Panc1 (cell line): ENCODE measurements at regions of chr4 and their contacts with region 1.

Region 1: DNA sequence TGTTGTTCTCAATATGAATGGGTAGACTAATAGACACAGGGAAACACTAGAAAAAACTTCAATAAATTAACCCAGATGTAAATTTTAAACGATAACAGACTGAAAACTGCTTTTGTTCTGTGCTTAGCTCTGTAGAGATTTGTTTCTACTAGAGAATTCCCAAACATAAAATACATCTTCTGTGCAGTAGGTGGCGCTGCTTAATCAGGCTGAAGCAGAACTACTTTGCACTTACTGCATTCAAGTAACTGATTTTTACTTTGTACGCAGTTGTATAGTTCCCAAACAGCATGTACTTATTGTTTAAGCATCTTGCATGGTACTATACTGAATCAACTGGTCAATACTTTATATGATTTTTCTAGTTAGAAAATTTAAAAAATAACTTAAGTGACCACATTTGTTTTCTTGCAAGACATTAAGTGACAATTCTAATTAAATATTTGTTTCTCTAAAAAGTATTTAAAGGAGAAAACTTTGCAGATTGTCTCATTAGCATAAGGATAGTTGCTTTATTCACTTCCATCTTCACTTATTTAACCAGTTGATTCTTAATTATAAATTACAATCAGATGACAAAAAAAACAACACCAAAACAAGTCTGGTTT is 490.6 kb downstream of the IL15 start:
- DNase-seq: peak; percentile 51
- ATAC-seq: peak; percentile 48; the same call in 1 of the 2 replicates
- H3K4me3 ChIP-seq: no peak overlapping the region
- H3K27ac ChIP-seq: no peak overlapping the region
- H3K4me1 ChIP-seq: no peaks in the 10 kb centered on the region
- H3K27me3 ChIP-seq: no peaks in the 10 kb centered on the region
- CTCF ChIP-seq: peak; percentile 68; the same call in 1 of the 2 replicates

Region 2: DNA sequence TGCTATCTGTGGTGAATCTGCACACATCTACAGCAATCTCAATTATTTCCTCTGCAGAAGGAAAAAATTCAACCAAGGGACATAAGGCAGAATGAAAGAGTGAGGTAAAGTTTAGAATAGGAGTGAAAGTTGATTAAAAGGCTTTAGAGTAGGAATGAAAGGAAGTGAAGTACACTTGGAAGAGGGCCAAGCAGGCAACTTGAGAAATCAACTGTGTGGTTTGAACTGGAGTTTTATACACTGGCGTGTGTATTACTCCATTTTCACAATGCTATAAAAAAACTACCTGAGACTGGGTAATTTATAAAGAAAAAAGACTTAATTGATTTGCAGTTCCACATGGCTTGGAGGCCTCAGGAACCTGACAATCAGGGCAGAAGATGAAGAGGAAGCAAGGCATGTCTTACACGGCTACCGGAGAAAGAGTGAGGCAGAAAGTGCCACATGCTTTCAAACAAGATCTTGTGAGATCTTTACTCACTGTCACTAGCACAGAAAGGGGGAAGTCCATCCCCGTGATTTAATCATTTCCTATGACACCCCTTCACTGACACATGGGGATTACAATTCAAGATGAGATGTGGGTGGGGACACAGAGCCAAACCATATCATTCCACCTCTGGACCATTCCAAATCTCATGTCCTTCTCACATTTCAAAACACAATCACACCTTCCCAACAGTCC is 255.8 kb before region 1 on chr4:
- CTCF ChIA-PET with region 1: no interaction called
- POLR2A ChIA-PET with region 1: no interaction called
- in situ Hi-C with region 1: no loop called
- intact Hi-C with region 1: no loop called
- DNase-seq: no peak
- ATAC-seq: no peak
- H3K4me3 ChIP-seq: no peak overlapping the region
- H3K27ac ChIP-seq: no peak overlapping the region
- H3K4me1 ChIP-seq: no peaks in the 10 kb centered on the region
- H3K27me3 ChIP-seq: no peaks in the 10 kb centered on the region
- CTCF ChIP-seq: no peak

Region 3: GRCh38 chr4:142095886-142096605 is 30.9 kb before region 1 on chr4:
- CTCF ChIA-PET with region 1: no interaction called
- POLR2A ChIA-PET with region 1: no interaction called
- in situ Hi-C with region 1: no loop called
- intact Hi-C with region 1: no loop called
- DNase-seq: peak; percentile 47
- ATAC-seq: peak; percentile 86
- H3K4me3 ChIP-seq: no peak overlapping the region
- H3K27ac ChIP-seq: no peak overlapping the region
- H3K4me1 ChIP-seq: no peaks in the 10 kb centered on the region
- H3K27me3 ChIP-seq: no peaks in the 10 kb centered on the region
- CTCF ChIP-seq: no peak

Region 4: DNA sequence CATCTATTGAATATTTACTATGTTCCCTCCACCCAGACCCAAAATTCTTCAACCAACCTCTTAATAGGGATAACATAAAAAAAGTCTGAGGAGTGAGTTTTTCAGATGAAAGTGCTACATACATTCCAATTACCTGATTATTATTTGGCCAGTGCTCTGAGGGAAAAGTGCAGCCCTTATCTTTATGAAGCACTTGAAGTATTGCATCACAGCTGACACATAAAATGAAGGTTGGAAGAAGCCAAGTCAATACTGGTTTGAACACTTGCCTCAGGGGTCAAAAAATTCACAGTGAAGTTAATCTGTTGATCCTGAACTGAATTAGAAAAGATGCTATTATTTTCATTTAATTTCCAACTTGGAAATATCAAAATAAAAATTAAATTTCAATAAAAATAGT is 220.2 kb after region 1 on chr4:
- CTCF ChIA-PET with region 1: no interaction called
- POLR2A ChIA-PET with region 1: no interaction called
- in situ Hi-C with region 1: no loop called
- intact Hi-C with region 1: loop called (anchors 5 kb)
- DNase-seq: no peak
- ATAC-seq: no peak
- H3K4me3 ChIP-seq: no peak overlapping the region
- H3K27ac ChIP-seq: no peak overlapping the region
- H3K4me1 ChIP-seq: no peaks in the 10 kb centered on the region
- H3K27me3 ChIP-seq: no peaks in the 10 kb centered on the region
- CTCF ChIP-seq: no peak

Region 5: GRCh38 chr4:142719854-142720541 is 593.0 kb after region 1 on chr4:
- CTCF ChIA-PET with region 1: no interaction called
- POLR2A ChIA-PET with region 1: no interaction called
- in situ Hi-C with region 1: no loop called
- intact Hi-C with region 1: loop called (anchors 10 kb)
- DNase-seq: no peak
- ATAC-seq: no peak
- H3K4me3 ChIP-seq: no peak overlapping the region
- H3K27ac ChIP-seq: no peak overlapping the region
- H3K4me1 ChIP-seq: no peaks in the 10 kb centered on the region
- H3K27me3 ChIP-seq: no peaks in the 10 kb centered on the region
- CTCF ChIP-seq: peak; percentile 53; the same call in 1 of the 2 replicates

Region 6: DNA sequence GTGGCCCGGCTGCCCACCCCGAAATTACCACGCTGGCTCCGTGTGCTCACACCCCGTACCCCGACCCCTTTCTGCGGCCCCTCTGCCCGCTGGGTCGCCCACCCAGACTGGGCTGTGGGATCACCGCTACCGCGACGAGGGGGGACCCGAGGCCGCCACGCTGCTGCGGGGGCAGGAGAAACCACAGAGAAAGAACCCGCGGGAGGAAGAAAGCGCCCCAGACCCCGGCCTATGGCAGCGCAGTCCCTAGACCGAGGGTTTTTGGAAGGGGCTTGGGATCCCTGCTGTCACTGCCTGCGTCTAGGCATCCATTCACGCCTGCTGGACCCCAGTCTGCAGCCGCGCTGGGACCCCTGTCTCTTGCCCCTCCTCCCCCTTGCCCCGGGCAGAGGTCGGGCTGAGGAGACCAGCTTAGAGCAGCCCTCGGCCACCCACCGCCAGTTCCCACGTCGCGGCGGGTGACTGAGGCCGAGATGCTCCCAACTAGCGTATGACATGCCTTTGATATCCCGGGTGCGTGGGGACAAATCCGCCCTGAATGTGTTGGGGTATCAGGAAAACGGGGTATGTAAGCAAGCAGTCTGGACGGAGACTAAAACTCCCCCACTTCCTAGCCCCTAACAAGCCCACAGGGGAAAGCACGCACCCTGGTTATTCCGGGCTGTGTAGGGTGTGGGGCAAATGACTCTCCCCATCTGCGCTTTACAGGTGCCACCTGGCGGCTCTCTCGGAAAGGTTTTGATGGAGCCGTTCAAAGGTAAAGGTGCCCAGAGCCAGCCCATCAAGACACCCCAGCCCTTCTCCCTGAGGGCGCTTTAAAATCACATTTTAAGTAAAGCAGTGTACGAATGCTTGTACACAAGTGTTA is 720.0 kb after region 1 on chr4:
- CTCF ChIA-PET with region 1: no interaction called
- POLR2A ChIA-PET with region 1: no interaction called
- in situ Hi-C with region 1: no loop called
- intact Hi-C with region 1: loop called (anchors 2 kb)
- DNase-seq: no peak
- ATAC-seq: peak; percentile 83
- H3K4me3 ChIP-seq: peak overlapping the region; percentile 50 to 52
- H3K27ac ChIP-seq: no peak overlapping the region
- H3K4me1 ChIP-seq: no peaks in the 10 kb centered on the region
- H3K27me3 ChIP-seq: no peaks in the 10 kb centered on the region
- CTCF ChIP-seq: peak; percentile 62